GM13977 (cell line): ENCODE measurements at regions of chr7 and their contacts with region 1.

Region 1: DNA sequence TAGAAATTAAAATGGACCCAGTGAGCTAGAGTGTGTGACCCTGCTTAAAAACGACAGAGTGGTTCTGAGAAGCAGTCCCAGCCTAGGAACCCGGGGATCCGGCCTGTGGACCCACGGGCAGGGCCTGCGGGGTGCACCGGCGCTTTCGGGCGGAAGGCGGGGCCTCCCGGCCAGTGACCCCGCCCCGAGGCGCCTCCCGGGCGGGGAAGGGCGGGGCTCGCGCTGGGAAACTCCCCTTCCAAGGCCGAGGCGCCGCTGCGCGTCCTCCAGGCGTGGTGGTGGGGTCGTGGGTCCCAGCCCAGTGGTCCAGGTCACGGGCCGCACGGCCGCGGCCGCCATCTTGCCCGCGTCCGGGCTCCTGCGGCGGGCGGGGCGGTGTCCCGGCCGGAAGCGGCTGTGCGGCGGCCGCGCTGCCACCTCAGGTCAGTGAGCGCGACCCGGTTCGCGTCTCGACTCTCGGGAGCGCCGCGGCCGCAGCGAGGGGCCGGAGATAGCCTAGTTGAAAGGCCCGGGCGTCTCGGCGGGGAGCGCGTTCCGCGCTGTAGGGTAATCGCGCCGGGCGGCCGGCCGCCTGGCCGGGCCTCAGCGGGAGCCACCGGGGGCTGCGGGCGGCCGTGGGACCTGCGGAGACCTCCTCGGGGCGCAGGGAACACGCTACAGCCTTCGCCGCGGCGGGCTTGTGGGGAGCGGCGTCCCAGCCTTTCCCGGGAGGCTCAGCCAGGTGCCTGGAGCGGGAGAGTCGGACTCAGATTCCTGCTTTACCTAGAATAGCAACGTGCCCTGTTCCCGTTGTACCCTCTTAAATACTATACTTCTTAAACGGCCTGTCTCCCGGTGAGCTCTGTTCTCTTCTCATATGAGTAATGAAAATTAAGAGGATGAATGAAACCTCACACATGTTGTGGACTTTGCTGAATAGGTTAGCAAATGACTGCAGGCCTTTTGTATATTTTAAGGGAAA is at the start of gene MIOS:
- DNase-seq: peak; percentile 97
- CTCF ChIP-seq: no peak

Region 2: DNA sequence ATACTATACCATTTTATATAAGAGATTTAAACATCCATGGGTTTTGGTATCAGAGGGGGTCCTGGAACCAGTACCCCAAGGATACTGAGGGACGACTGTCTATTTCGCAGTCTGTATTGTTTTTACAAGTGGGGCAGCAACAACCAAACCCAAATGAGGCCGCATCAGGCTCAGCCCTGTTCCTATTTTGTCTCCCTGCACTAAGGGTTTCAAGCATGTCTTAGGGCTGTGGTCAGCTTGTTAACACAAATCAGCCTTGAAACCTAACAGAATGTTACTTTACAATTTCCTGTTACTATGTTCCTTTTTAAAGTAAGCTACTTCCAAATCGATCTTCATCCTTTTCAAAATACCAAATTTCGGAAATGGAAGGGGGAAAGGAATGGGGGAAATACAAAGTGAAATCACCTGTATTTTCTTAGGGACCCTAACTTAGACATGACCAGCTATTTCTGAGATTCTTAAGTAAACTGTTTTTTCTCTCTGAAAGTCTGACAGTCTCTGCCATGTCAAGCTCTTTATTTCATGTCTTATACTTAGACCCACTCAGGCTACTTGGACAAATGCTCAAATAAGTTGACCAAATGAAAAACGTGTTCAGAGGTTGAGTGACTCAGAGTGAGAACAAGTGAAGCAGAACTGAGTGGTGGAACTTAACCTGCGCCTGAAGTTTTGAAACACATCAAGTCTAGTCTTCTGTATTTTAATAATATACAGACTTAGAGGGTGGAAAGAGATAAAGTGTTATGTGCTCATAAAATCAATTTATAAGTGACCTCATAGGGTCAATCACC is 308.8 kb before region 1 on chr7:
- in situ Hi-C with region 1: loop called (anchors 10 kb)
- DNase-seq: peak; percentile 62
- CTCF ChIP-seq: no peak

Region 3: GRCh38 chr7:7867846-7868571 is 301.1 kb after region 1 on chr7:
- in situ Hi-C with region 1: no loop called
- DNase-seq: no peak
- CTCF ChIP-seq: no peak